CD4-positive, alpha-beta memory T cell (primary cell): ENCODE measurements at regions of chr7 and their contacts with region 1.

Region 1: DNA sequence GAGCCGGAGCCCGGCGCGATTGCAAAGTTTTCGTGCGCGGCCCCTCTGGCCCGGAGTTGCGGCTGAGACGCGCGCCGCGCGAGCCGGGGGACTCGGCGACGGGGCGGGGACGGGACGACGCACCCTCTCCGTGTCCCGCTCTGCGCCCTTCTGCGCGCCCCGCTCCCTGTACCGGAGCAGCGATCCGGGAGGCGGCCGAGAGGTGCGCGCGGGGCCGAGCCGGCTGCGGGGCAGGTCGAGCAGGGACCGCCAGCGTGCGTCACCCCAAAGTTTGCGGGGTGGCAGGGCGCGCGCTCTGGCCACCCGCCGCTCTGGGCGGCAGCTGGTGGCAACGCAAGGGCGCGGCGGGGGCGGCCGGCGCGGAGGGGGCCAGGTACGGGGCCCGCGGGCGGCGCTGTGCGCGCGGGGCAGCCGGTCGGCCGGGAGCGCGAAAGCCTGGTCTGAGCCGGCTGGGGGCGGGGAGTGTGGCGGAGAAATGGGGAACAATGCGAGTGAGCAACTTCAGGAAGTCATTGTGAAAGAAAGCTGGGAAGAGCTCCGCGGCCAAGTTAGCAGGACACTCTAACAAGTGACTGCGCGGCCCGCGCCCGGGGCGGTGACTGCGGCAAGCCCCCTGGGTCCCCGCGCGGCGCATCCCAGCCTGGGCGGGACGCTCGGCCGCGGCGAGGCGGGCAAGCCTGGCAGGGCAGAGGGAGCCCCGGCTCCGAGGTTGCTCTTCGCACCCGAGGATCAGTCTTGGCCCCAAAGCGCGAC is at the start of gene IKZF1:
- DNase-seq: peak; percentile 53 to 66 (median 61)
- H3K4me3 ChIP-seq: peak within 1 kb of the TSS; percentile 86 to 96
- H3K4me3 Mint-ChIP-seq: peak within 1 kb of the TSS; percentile 97 to 100 (median 100)
- H3K27ac ChIP-seq: peak within 1 kb of the TSS; percentile 90
- H3K27ac Mint-ChIP-seq: peak within 1 kb of the TSS; percentile 90 to 99 (median 96)
- H3K4me1 ChIP-seq: peaks cover 53% of the 10 kb centered on the region
- H3K4me1 Mint-ChIP-seq: peaks cover 33 to 71% (median 47%) of the 10 kb centered on the region in 4 donors
- H3K27me3 ChIP-seq: no peaks in the 10 kb centered on the region
- H3K27me3 Mint-ChIP-seq: no peaks in the 10 kb centered on the region
- total RNA-seq, gene IKZF1: 474 to 479 TPM

Region 2: GRCh38 chr7:50212666-50213621 is 91.4 kb before region 1 on chr7:
- CTCF ChIA-PET with region 1: interaction called, 173 read pairs
- POLR2A ChIA-PET with region 1: interaction called, 675 read pairs
- intact Hi-C with region 1: no loop called
- DNase-seq: peak in 1 of 5 donors; percentile 36
- H3K4me3 ChIP-seq: no peak overlapping the region
- H3K4me3 Mint-ChIP-seq: peak overlapping the region in 7 of 8 donors; percentile 29 to 81 (median 72)
- H3K27ac ChIP-seq: no peak overlapping the region
- H3K27ac Mint-ChIP-seq: peak overlapping the region; percentile 16 to 94 (median 60)
- H3K4me1 ChIP-seq: peaks cover 89% of the 10 kb centered on the region
- H3K4me1 Mint-ChIP-seq: peaks cover 63 to 99% (median 83%) of the 10 kb centered on the region in 4 donors
- H3K27me3 ChIP-seq: no peaks in the 10 kb centered on the region
- H3K27me3 Mint-ChIP-seq: no peaks in the 10 kb centered on the region

Region 3: GRCh38 chr7:50293509-50294179 is 10.7 kb before region 1 on chr7:
- CTCF ChIA-PET with region 1: interaction called, 3 read pairs
- POLR2A ChIA-PET with region 1: interaction called, 14 read pairs
- intact Hi-C with region 1: loop called (anchors 1 kb)
- DNase-seq: no peak
- H3K4me3 ChIP-seq: no peak overlapping the region
- H3K4me3 Mint-ChIP-seq: no peak overlapping the region
- H3K27ac ChIP-seq: no peak overlapping the region
- H3K27ac Mint-ChIP-seq: no peak overlapping the region
- H3K4me1 ChIP-seq: peaks cover 3% of the 10 kb centered on the region
- H3K4me1 Mint-ChIP-seq: peaks cover 18 to 44% (median 29%) of the 10 kb centered on the region in 4 donors
- H3K27me3 ChIP-seq: no peaks in the 10 kb centered on the region
- H3K27me3 Mint-ChIP-seq: no peaks in the 10 kb centered on the region

Region 4: GRCh38 chr7:50335795-50336754 is 31.7 kb after region 1 on chr7:
- CTCF ChIA-PET with region 1: interaction called, 27 read pairs
- POLR2A ChIA-PET with region 1: interaction called, 2,673 read pairs
- intact Hi-C with region 1: loop called (anchors 1 kb)
- DNase-seq: peak; percentile 66 to 95 (median 70)
- H3K4me3 ChIP-seq: peak overlapping the region in 1 of 2 donors; percentile 23
- H3K4me3 Mint-ChIP-seq: peak overlapping the region in 1 of 8 donors; percentile 53
- H3K27ac ChIP-seq: peak overlapping the region; percentile 96
- H3K27ac Mint-ChIP-seq: no peak overlapping the region
- H3K4me1 ChIP-seq: peaks cover 100% of the 10 kb centered on the region
- H3K4me1 Mint-ChIP-seq: peaks cover 0 to 63% (median 39%) of the 10 kb centered on the region in 4 donors
- H3K27me3 ChIP-seq: no peaks in the 10 kb centered on the region
- H3K27me3 Mint-ChIP-seq: no peaks in the 10 kb centered on the region

Region 5: DNA sequence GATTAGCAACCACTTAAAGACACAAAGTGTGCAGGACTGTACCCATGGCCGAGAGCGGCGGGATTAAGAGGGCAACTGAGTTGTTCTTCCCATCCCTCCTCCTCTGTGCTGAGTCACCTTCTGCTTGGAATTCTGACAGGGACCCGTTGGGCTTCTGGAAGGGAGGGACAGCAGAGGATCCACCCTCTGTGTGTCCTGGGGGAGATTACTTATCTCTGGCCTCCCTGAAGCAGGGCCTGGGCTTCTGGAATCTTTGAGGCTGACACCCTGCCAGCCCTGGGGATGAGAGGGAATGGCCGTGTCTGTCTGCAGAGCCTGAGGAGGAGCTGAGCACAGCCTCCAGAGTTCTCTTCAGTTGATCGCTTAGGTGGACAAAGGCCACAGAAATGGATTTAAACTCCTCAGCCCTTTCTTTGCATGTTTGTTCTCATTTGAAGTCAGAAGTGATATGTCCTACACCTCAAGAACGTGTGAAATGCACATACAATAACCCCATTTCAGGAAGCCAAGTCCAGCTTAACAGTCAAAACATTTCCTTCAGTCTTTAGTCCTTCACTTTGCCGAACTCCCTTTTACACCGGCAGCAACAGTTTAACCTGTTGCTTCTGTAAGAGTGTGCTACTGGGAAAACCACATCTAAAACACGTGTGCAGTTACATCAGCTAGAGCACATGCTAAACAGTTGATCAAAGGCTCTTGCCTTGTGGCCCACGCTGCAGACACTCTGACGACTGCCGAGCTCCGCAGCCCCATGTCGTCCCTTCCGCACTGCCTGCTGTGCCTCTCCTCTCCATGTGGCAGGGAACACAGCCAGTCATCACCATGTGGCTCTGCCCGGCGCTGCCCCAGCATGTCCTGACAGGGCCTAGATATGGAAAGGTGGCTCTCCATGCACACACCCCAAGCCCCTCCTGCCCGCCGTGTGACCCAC is 55.9 kb after region 1 on chr7:
- CTCF ChIA-PET with region 1: interaction called, 336 read pairs
- POLR2A ChIA-PET with region 1: interaction called, 2,673 read pairs
- intact Hi-C with region 1: loop called (anchors 2 kb)
- DNase-seq: peak; percentile 84 to 94 (median 88)
- H3K4me3 ChIP-seq: peak overlapping the region; percentile 1 to 25
- H3K4me3 Mint-ChIP-seq: peak overlapping the region; percentile 70 to 87 (median 78)
- H3K27ac ChIP-seq: peak overlapping the region; percentile 89
- H3K27ac Mint-ChIP-seq: peak overlapping the region in 6 of 7 donors; percentile 98 to 100 (median 99)
- H3K4me1 ChIP-seq: peaks cover 99% of the 10 kb centered on the region
- H3K4me1 Mint-ChIP-seq: peaks cover 87 to 99% (median 95%) of the 10 kb centered on the region in 4 donors
- H3K27me3 ChIP-seq: no peaks in the 10 kb centered on the region
- H3K27me3 Mint-ChIP-seq: no peaks in the 10 kb centered on the region

Region 6: GRCh38 chr7:50733555-50733954 is 429.2 kb after region 1 on chr7:
- CTCF ChIA-PET with region 1: no interaction called
- POLR2A ChIA-PET with region 1: no interaction called
- intact Hi-C with region 1: no loop called
- DNase-seq: no peak
- H3K4me3 ChIP-seq: no peak overlapping the region
- H3K4me3 Mint-ChIP-seq: no peak overlapping the region
- H3K27ac ChIP-seq: no peak overlapping the region
- H3K27ac Mint-ChIP-seq: no peak overlapping the region
- H3K4me1 ChIP-seq: no peaks in the 10 kb centered on the region
- H3K4me1 Mint-ChIP-seq: peaks cover 0 to 5% (median 1%) of the 10 kb centered on the region in 4 donors
- H3K27me3 ChIP-seq: no peaks in the 10 kb centered on the region
- H3K27me3 Mint-ChIP-seq: no peaks in the 10 kb centered on the region